Gastrocnemius medialis (tissue), 4 donors: ENCODE measurements at regions of chr11 and their contacts with region 1.

Region 1: GRCh38 chr11:19978668-19979518 is 181.4 kb downstream of the DBX1 start:
- DNase-seq: no peak
- ATAC-seq: no peak
- H3K4me3 ChIP-seq: no peak overlapping the region
- H3K27ac ChIP-seq: no peak overlapping the region
- H3K4me1 ChIP-seq: peaks cover 0 to 5% of the 10 kb centered on the region in 2 donors
- H3K27me3 ChIP-seq: no peaks in the 10 kb centered on the region
- CTCF ChIP-seq: no peak
- POLR2A ChIP-seq: no peak

Region 2: DNA sequence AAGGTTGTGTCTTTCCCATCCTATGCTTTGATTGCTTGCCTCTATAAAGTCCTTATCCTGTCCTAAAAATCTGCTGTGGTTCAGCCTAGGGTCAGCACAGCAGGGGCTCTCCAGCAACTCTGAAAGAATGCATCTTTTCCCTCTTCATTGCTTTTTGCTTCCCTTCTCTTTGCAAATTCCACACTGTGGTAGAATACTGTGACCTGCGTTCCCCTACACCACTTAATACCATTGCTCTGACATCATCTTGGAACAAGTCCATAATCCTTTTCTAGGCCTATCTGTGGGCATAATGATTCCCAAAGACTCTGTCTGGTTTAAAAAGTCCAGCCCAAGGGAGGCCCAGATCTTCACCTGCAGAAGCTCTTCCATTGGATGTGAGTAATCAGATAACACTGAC is 88.6 kb before region 1 on chr11:
- in situ Hi-C with region 1: loop called in 1 of 4 experiments (anchors 25 kb)
- intact Hi-C with region 1: no loop called
- DNase-seq: no peak
- ATAC-seq: no peak
- H3K4me3 ChIP-seq: no peak overlapping the region
- H3K27ac ChIP-seq: no peak overlapping the region
- H3K4me1 ChIP-seq: peaks cover 0 to 3% of the 10 kb centered on the region in 2 donors
- H3K27me3 ChIP-seq: no peaks in the 10 kb centered on the region
- CTCF ChIP-seq: no peak
- POLR2A ChIP-seq: no peak